ENCODE measurements at regions of chr1 and their contacts with region 1.

Region 1: GRCh38 chr1:58546520-58547308 is at the start of gene OMA1:
- DNase-seq: peak; percentile 98
- H3K4me3 ChIP-seq: peak within 1 kb of the TSS; percentile 76
- H3K27ac ChIP-seq: peak within 1 kb of the TSS; percentile 96
- H3K4me1 ChIP-seq: peaks cover 22% of the 10 kb centered on the region
- H3K27me3 ChIP-seq: no peaks in the 10 kb centered on the region
- CTCF ChIP-seq: peak; percentile 99
- total RNA-seq, gene OMA1: 11.9 and 14.6 TPM in 2 replicates

Region 2: GRCh38 chr1:57424231-57425027 is 1122.3 kb before region 1 on chr1:
- CTCF ChIA-PET with region 1: no interaction called
- POLR2A ChIA-PET with region 1: no interaction called
- intact Hi-C with region 1: loop called (anchors 10 kb)
- DNase-seq: peak; percentile 92
- H3K4me3 ChIP-seq: peak overlapping the region; percentile 91
- H3K27ac ChIP-seq: peak overlapping the region; percentile 88
- H3K4me1 ChIP-seq: peaks cover 26% of the 10 kb centered on the region
- H3K27me3 ChIP-seq: no peaks in the 10 kb centered on the region
- CTCF ChIP-seq: peak; percentile 96

Region 3: DNA sequence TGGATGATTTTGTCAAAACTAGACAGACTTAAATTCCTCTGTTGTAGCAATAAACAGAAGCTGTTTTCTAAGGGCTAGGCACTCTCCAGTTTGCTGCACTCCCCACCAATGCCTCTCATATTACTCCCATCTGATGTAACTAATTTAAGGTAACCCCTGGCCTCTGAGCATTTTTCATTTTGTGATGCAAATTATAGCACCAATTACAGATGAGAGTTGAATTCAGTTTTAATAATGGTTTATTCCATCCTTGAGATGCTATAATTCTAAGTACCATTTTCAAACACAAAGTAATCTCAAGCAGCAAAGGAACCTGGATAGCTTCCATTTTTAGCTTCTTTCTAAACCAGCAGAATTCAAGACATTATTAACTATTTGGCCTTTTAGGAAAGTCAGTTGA is 842.5 kb before region 1 on chr1:
- CTCF ChIA-PET with region 1: no interaction called
- POLR2A ChIA-PET with region 1: no interaction called
- intact Hi-C with region 1: loop called (anchors 1 kb)
- DNase-seq: peak; percentile 95
- H3K4me3 ChIP-seq: no peak overlapping the region
- H3K27ac ChIP-seq: peak overlapping the region; percentile 98
- H3K4me1 ChIP-seq: peaks cover 63% of the 10 kb centered on the region
- H3K27me3 ChIP-seq: no peaks in the 10 kb centered on the region
- CTCF ChIP-seq: no peak

Region 4: DNA sequence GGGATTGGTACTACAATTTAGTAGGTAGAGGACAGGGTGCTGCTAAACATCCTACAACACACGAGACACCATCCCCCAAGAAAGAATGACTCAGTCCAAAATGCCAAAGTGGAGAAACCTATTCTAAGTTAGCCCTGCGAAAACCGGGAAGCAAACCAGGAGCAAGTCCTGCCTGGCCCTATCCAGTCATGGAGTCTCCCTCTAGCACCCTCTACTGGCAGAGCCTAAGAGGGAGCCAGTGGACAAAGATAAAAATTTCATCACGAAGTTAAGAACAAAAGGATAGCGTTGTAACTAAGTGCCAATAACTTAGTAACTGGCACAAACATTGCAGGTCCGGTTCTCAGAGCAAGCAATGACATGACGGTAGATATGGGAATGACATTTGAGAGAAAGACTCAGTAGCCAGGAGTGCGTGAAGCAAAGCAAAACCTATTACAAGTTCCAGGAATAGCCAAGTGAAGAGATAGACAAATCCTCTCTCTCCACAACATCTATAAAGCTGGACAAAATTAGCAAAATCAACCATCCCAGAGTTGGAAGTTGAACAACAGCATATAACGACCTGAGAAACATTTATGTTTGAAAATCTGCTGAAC is 383.7 kb before region 1 on chr1:
- CTCF ChIA-PET with region 1: no interaction called
- POLR2A ChIA-PET with region 1: no interaction called
- intact Hi-C with region 1: loop called (anchors 5 kb)
- DNase-seq: peak; percentile 87
- H3K4me3 ChIP-seq: no peak overlapping the region
- H3K27ac ChIP-seq: no peak overlapping the region
- H3K4me1 ChIP-seq: peaks cover 17% of the 10 kb centered on the region
- H3K27me3 ChIP-seq: no peaks in the 10 kb centered on the region
- CTCF ChIP-seq: peak; percentile 98

Region 5: GRCh38 chr1:58304346-58304975 is 242.3 kb before region 1 on chr1:
- CTCF ChIA-PET with region 1: no interaction called
- POLR2A ChIA-PET with region 1: no interaction called
- intact Hi-C with region 1: loop called (anchors 5 kb)
- DNase-seq: peak; percentile 79
- H3K4me3 ChIP-seq: no peak overlapping the region
- H3K27ac ChIP-seq: peak overlapping the region; percentile 20
- H3K4me1 ChIP-seq: peaks cover 40% of the 10 kb centered on the region
- H3K27me3 ChIP-seq: no peaks in the 10 kb centered on the region
- CTCF ChIP-seq: no peak

Region 6: DNA sequence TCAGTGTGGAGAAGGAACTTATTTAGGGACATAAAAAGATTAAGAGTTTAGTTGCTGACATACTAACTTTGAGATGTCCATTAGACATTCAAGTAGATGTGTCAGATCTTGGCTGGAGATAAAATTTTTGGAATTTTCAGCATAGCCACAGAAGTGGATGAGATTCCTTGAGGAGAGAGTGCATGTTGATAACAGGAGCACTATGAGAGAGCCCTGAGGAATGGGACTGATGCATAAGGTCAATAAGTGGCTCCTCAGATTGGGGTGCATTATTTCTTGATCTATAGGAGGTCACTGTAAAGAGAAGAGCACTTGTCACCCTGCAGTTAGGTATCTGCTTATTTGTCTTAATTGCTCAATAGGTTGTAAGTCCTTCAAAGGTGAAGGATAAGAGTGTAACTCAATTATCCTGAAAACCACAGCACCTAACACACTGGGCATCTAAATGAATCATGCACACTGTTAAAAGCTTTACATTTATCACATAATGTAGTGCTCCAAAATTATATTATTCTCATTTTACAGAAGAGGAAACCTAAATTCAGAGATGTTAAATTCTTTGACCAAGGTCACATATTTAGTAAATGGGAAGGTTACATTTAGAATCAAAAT is 82.4 kb after region 1 on chr1:
- CTCF ChIA-PET with region 1: no interaction called
- POLR2A ChIA-PET with region 1: no interaction called
- intact Hi-C with region 1: no loop called
- DNase-seq: no peak
- H3K4me3 ChIP-seq: no peak overlapping the region
- H3K27ac ChIP-seq: no peak overlapping the region
- H3K4me1 ChIP-seq: no peaks in the 10 kb centered on the region
- H3K27me3 ChIP-seq: no peaks in the 10 kb centered on the region
- CTCF ChIP-seq: no peak

Region 7: DNA sequence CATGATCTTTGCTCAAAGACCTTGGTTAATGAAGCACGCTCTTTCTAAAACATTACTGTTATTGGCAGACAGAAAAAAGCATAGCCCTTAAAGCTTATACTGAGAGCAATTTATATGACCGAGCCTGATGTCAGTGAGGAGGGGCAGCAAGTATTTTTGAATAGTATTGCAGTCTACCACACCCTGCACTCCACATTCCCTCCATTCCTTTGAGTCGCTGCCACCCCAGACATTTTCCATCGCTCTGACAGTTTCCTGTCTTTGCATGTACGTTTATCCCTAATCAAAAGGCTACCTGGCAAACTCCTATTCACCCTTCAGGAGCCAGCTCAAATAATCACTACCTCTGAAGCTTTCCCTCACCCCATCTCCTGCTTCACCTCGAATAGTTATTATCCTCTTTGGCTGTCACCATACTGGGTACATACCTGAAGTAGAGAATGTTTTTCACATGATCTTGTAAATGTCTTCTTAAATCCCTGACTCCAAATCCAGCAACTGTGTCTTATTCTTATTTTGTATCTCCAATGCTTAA is 242.7 kb after region 1 on chr1:
- CTCF ChIA-PET with region 1: no interaction called
- POLR2A ChIA-PET with region 1: no interaction called
- intact Hi-C with region 1: no loop called
- DNase-seq: no peak
- H3K4me3 ChIP-seq: no peak overlapping the region
- H3K27ac ChIP-seq: no peak overlapping the region
- H3K4me1 ChIP-seq: no peaks in the 10 kb centered on the region
- H3K27me3 ChIP-seq: peaks cover 21% of the 10 kb centered on the region
- CTCF ChIP-seq: no peak

Region 8: DNA sequence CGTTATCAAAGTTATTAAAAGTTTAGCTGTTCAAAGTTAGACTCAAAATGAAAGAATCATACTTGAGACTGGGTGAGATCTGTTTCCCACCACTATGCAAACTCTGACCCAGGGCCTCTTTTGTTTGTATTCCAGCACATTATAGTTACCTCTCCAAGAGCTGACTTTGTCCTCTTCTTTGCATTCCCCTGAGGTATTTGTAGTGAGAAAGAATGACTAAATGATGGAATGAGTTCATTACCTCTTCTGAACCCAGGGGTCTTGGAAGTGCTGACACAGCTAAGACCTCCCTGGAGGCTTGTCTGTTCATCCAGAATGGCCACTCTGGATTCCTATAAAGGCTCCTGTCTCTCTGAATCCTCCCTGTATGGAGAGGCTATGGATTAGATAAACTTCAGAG is 812.6 kb after region 1 on chr1:
- CTCF ChIA-PET with region 1: no interaction called
- POLR2A ChIA-PET with region 1: interaction called, 11 read pairs
- intact Hi-C with region 1: no loop called
- DNase-seq: no peak
- H3K4me3 ChIP-seq: no peak overlapping the region
- H3K27ac ChIP-seq: no peak overlapping the region
- H3K4me1 ChIP-seq: no peaks in the 10 kb centered on the region
- H3K27me3 ChIP-seq: no peaks in the 10 kb centered on the region
- CTCF ChIP-seq: no peak

Region 9: DNA sequence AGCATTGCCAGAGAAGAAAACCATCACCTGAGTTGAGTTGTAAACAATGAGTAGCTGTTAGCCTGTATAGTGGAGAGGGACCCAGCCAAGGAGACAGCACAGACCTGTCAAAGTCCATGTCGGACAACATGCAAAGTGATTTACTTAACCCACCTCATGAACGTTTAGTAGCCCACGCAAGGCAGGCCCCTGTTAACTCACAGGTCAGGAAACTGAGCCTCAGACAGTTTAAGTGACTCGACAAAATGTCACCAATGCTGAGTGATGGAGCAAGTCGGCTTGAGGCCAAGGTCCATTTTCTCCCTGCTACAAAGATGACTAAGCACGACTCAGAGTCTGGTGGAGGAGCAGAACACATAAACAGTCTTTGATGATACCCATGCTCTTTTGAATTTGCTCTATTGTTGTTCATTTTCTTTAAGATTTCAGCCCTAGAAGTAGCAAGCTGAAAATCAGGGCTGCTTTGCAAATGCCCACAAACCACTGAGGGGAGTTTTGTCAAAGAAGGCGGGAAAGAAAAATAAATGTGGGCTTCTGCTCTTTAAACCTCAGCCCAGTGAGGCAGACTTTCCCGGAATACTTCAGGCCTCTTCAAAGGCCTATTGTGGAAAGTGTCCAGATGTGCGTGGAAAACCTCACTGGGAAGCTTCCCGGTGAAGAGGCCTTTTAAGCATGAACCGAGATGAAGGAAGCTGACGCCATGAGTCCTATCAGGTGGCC is 1184.2 kb after region 1 on chr1:
- CTCF ChIA-PET with region 1: no interaction called
- POLR2A ChIA-PET with region 1: no interaction called
- intact Hi-C with region 1: no loop called
- DNase-seq: peak; percentile 59
- H3K4me3 ChIP-seq: no peak overlapping the region
- H3K27ac ChIP-seq: no peak overlapping the region
- H3K4me1 ChIP-seq: peaks cover 4% of the 10 kb centered on the region
- H3K27me3 ChIP-seq: no peaks in the 10 kb centered on the region
- CTCF ChIP-seq: no peak

Measured in A673 (cell line).